ENCODE measurements at regions of chr1 and their contacts with region 1.

Region 1: GRCh38 chr1:17569200-17570161 is 30.0 kb downstream of the ARHGEF10L start:
- DNase-seq: peak; percentile 83
- H3K4me3 ChIP-seq: no peak overlapping the region
- H3K27ac ChIP-seq: peak overlapping the region; percentile 87 to 92
- H3K4me1 ChIP-seq: peaks cover 5% of the 10 kb centered on the region
- H3K27me3 ChIP-seq: no peaks in the 10 kb centered on the region
- CTCF ChIP-seq: no peak
- POLR2A ChIP-seq: peak; percentile 15

Region 2: DNA sequence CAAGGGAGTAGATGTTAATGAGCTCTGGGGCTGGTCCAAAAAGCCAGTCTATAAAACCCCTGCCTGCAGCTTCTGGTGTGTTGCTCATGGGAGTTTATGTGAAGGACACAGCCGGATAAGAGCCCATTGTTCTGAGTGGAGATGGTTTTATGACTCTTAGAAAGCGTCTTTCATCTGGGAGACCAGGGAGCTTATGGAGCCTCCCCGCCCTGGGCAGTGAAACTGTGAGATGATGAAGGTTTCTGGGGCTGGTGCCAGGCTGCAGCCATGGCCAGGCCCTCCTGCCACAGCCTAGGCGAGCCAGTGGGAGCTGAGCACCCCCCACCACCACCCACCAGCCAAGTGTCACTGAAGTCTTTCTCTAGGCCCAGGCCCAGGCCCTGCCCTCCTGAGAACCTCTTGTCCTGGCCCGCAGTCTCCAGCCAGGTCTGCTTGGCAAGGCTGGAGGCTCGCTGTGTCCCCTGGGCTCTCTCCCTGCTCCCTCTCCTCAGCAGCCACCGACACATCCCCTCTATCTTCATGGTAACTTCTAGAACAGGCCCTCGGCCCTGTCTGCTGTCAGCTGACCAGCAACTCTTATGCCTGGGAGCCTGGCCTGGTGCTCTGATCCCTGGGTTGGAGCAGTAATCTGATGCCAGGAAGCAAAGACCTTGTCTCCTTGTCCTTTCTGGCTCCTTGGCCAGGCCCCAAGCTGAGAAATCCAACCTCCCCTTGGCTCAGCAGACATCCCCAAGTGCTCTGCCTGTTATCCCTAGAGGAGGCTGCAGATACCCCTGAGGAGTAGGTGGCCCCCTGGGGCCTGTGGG is 37.6 kb before region 1 on chr1:
- intact Hi-C with region 1: loop called (anchors 1 kb)
- DNase-seq: peak; percentile 80
- H3K4me3 ChIP-seq: no peak overlapping the region
- H3K27ac ChIP-seq: peak overlapping the region; percentile 65 to 84
- H3K4me1 ChIP-seq: no peaks in the 10 kb centered on the region
- H3K27me3 ChIP-seq: no peaks in the 10 kb centered on the region
- CTCF ChIP-seq: no peak
- POLR2A ChIP-seq: no peak

Region 3: GRCh38 chr1:17606826-17607440 is 37.5 kb after region 1 on chr1:
- intact Hi-C with region 1: no loop called
- DNase-seq: peak; percentile 66
- H3K4me3 ChIP-seq: no peak overlapping the region
- H3K27ac ChIP-seq: peak overlapping the region; percentile 40 to 56
- H3K4me1 ChIP-seq: no peaks in the 10 kb centered on the region
- H3K27me3 ChIP-seq: no peaks in the 10 kb centered on the region
- CTCF ChIP-seq: peak; percentile 88 to 93 (median 92)
- POLR2A ChIP-seq: no peak

Region 4: GRCh38 chr1:17687145-17687544 is 117.7 kb after region 1 on chr1:
- intact Hi-C with region 1: no loop called
- DNase-seq: no peak
- H3K4me3 ChIP-seq: no peak overlapping the region
- H3K27ac ChIP-seq: no peak overlapping the region
- H3K4me1 ChIP-seq: no peaks in the 10 kb centered on the region
- H3K27me3 ChIP-seq: no peaks in the 10 kb centered on the region
- CTCF ChIP-seq: no peak
- POLR2A ChIP-seq: no peak